Activated CD8-positive, alpha-beta T cell treated with anti-CD3 and anti-CD28 coated beads, Interleukin-2, amount 10 ng/mL, durations not matched to agents 7 days and 5 days (primary cell): ENCODE measurements at regions of chr12 and their contacts with region 1.

Region 1: GRCh38 chr12:11486623-11487444 is 91.5 kb upstream of the PRB2 start:
- DNase-seq: peak; percentile 90
- ATAC-seq: peak; percentile 93
- H3K4me3 Mint-ChIP-seq: no peak overlapping the region
- H3K27ac Mint-ChIP-seq: no peak overlapping the region
- H3K4me1 Mint-ChIP-seq: peaks cover 5% of the 10 kb centered on the region
- H3K27me3 Mint-ChIP-seq: peaks cover 17% of the 10 kb centered on the region

Region 2: GRCh38 chr12:10771132-10771733 is 715.6 kb before region 1 on chr12:
- CTCF ChIA-PET with region 1: interaction called, 22 read pairs
- POLR2A ChIA-PET with region 1: no interaction called
- DNase-seq: no peak
- ATAC-seq: no peak
- H3K4me3 Mint-ChIP-seq: no peak overlapping the region
- H3K27ac Mint-ChIP-seq: no peak overlapping the region
- H3K4me1 Mint-ChIP-seq: no peaks in the 10 kb centered on the region
- H3K27me3 Mint-ChIP-seq: peaks cover 57% of the 10 kb centered on the region

Region 3: DNA sequence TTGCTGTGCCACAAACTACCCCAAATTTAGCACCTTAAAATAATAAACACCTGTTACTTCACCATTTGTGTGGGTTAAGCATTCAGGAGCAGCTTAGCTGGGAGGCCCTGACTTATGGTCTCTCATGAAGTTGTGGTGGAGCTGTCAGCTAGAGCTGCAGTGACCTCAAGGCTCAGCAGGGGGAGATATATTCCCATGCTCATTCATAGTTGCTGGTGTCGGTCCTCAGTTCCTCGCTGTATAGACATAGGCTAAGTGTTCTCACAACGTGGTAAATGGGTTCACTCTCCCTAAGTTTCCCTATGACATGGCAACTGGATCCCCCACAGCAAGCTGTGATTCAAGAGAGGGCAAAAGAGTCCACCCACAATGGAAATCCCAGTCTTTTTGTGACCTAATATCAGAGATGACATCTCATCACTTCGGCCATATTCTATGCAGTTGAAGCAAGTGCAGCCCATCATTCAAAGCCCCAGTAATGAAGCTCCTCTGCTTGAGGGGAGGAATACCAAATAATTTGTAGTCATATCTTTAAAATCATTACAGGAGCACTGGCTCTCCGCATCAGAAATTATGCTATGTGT is 258.4 kb before region 1 on chr12:
- CTCF ChIA-PET with region 1: interaction called, 45 read pairs
- POLR2A ChIA-PET with region 1: no interaction called
- DNase-seq: peak; percentile 53
- ATAC-seq: no peak
- H3K4me3 Mint-ChIP-seq: no peak overlapping the region
- H3K27ac Mint-ChIP-seq: no peak overlapping the region
- H3K4me1 Mint-ChIP-seq: no peaks in the 10 kb centered on the region
- H3K27me3 Mint-ChIP-seq: peaks cover 2% of the 10 kb centered on the region

Region 4: GRCh38 chr12:11595080-11595479 is 108.2 kb after region 1 on chr12:
- CTCF ChIA-PET with region 1: no interaction called
- POLR2A ChIA-PET with region 1: no interaction called
- DNase-seq: no peak
- ATAC-seq: no peak
- H3K4me3 Mint-ChIP-seq: no peak overlapping the region
- H3K27ac Mint-ChIP-seq: no peak overlapping the region
- H3K4me1 Mint-ChIP-seq: no peaks in the 10 kb centered on the region
- H3K27me3 Mint-ChIP-seq: peaks cover 21% of the 10 kb centered on the region